SK-N-SH (cell line): ENCODE measurements at regions of chr1 and their contacts with region 1.

Region 1: DNA sequence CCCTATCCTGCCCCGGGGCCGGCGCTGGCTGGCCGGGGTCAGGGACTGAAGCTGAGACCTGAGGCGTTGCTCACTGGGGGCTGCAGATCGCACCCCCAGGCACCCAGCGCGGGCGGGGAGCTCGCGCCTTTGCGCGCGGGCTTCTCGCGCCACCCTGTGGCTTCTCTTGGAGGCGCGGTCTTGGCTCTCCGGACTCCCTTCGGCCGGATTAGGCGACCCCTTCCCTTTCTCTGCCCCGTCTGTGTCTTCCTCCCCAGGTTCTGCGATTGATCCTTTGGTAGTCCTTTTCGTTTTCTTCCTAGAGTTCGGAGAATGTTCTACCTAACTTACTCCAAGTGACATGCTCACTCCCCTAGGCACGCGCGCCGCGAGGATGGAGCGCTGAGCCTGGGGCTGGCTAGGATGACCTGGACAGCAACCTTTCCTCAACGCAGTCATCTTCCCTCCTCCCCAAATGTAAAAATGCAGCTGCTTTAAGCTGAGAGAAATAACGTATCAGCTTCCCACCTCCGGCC is 495 bp upstream of the NTRK1 start:
- DNase-seq: peak; percentile 87
- H3K4me3 ChIP-seq: peak overlapping the region; percentile 54 to 64
- H3K27ac ChIP-seq: peak overlapping the region in 1 of 2 experiments; percentile 97; a peak in 2 of 4 replicates
- H3K4me1 ChIP-seq: peaks cover 3 to 74% of the 10 kb centered on the region in 2 experiments; a peak in 2 of 4 replicates
- H3K27me3 ChIP-seq: peaks cover 39% of the 10 kb centered on the region
- CTCF ChIP-seq: peak; percentile 85
- EP300 ChIP-seq: no peak
- RAD21 ChIP-seq: peak; percentile 86

Region 2: GRCh38 chr1:156705918-156706656 is 154.1 kb before region 1 on chr1:
- CTCF ChIA-PET with region 1: interaction called, 13 read pairs
- POLR2A ChIA-PET with region 1: no interaction called
- DNase-seq: peak; percentile 90
- H3K4me3 ChIP-seq: peak overlapping the region; percentile 54 to 58
- H3K27ac ChIP-seq: peak overlapping the region in 1 of 2 experiments; percentile 98; a peak in 2 of 4 replicates
- H3K4me1 ChIP-seq: peaks cover 70 to 90% of the 10 kb centered on the region in 2 experiments
- H3K27me3 ChIP-seq: no peaks in the 10 kb centered on the region
- CTCF ChIP-seq: peak; percentile 96
- EP300 ChIP-seq: no peak
- RAD21 ChIP-seq: peak; percentile 66

Region 3: GRCh38 chr1:156746728-156747631 is 113.2 kb before region 1 on chr1:
- CTCF ChIA-PET with region 1: interaction called, 11 read pairs
- POLR2A ChIA-PET with region 1: interaction called, 5 read pairs
- DNase-seq: peak; percentile 91
- H3K4me3 ChIP-seq: peak overlapping the region; percentile 78 to 98
- H3K27ac ChIP-seq: peak overlapping the region; percentile 100
- H3K4me1 ChIP-seq: peaks cover 37 to 48% of the 10 kb centered on the region in 2 experiments
- H3K27me3 ChIP-seq: no peaks in the 10 kb centered on the region
- CTCF ChIP-seq: peak; percentile 46
- EP300 ChIP-seq: peak; percentile 14 to 34; a peak in 1 of 4 replicates
- RAD21 ChIP-seq: no peak

Region 4: DNA sequence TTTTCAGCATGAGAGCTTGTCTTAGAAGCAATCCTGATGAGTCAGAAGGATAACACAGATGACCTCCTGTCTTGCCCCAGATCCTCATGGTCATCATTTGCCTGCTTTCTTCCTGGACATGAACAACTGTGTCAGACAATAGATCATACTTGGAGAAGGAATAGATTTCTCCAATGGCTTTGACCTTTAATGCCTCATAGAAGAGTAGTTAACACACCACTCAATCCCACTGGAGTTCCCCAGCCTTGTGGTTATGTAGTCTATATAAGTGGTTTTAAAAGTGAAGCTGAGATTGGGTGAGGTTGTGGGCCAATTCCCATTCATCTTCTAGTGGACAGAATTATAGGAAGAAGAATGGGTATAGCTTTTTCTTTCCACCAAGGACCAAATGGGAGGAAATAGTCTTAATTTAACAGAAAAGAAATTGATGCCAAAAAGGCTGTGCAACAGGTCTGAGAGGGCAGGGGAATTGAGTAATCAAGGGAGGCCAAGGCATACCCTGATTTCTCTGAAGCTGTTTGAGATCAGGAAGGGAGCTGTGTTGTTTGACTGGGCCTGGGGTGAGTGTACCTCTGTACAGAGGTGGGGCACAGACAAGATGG is 78.5 kb before region 1 on chr1:
- CTCF ChIA-PET with region 1: interaction called, 28 read pairs
- POLR2A ChIA-PET with region 1: no interaction called
- DNase-seq: no peak
- H3K4me3 ChIP-seq: no peak overlapping the region
- H3K27ac ChIP-seq: peak overlapping the region; percentile 2 to 43; a peak in 2 of 4 replicates
- H3K4me1 ChIP-seq: peaks cover 9 to 13% of the 10 kb centered on the region in 2 experiments; a peak in 3 of 4 replicates
- H3K27me3 ChIP-seq: no peaks in the 10 kb centered on the region
- CTCF ChIP-seq: no peak
- EP300 ChIP-seq: no peak
- RAD21 ChIP-seq: no peak

Region 5: DNA sequence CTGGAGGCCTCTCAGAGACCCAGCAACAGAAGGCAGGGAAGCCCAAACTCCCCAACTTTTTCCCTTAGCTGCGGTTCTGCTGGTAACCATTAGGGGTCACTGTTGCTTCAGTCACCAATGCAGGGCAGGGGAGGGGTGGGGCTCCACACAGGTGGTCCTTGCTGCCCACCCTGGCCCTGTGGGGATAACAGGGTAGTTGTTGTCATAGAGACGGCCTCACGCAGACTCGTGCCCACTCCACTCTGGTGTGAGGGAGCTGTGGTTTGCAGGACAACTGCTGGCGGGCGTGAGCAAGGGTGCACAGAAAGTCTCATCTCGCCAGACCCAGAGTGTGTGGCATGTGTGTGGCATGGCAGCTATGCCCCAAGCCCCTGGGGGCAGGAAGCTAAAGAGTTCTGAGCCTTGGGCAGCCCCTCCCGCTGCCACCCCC is 21.2 kb before region 1 on chr1:
- CTCF ChIA-PET with region 1: interaction called, 476 read pairs
- POLR2A ChIA-PET with region 1: interaction called, 38 read pairs
- DNase-seq: peak; percentile 81
- H3K4me3 ChIP-seq: no peak overlapping the region; a peak in 1 of 4 replicates
- H3K27ac ChIP-seq: peak overlapping the region in 1 of 2 experiments; percentile 43; a peak in 2 of 4 replicates
- H3K4me1 ChIP-seq: peaks cover 0 to 54% of the 10 kb centered on the region in 2 experiments; a peak in 2 of 4 replicates
- H3K27me3 ChIP-seq: peaks cover 9% of the 10 kb centered on the region; the same call in 1 of the 2 replicates
- CTCF ChIP-seq: peak; percentile 94
- EP300 ChIP-seq: no peak; a peak in 1 of 4 replicates
- RAD21 ChIP-seq: peak; percentile 84

Region 6: GRCh38 chr1:156892190-156893047 is 32.2 kb after region 1 on chr1:
- CTCF ChIA-PET with region 1: interaction called, 455 read pairs
- POLR2A ChIA-PET with region 1: interaction called, 27 read pairs
- DNase-seq: peak; percentile 94
- H3K4me3 ChIP-seq: no peak overlapping the region; a peak in 1 of 4 replicates
- H3K27ac ChIP-seq: no peak overlapping the region
- H3K4me1 ChIP-seq: peaks cover 23 to 38% of the 10 kb centered on the region in 2 experiments; a peak in 3 of 4 replicates
- H3K27me3 ChIP-seq: no peaks in the 10 kb centered on the region
- CTCF ChIP-seq: peak; percentile 92
- EP300 ChIP-seq: no peak
- RAD21 ChIP-seq: peak; percentile 75